Stomach (tissue), 19 donors: ENCODE measurements at regions of chr7 and their contacts with region 1.

Region 1: DNA sequence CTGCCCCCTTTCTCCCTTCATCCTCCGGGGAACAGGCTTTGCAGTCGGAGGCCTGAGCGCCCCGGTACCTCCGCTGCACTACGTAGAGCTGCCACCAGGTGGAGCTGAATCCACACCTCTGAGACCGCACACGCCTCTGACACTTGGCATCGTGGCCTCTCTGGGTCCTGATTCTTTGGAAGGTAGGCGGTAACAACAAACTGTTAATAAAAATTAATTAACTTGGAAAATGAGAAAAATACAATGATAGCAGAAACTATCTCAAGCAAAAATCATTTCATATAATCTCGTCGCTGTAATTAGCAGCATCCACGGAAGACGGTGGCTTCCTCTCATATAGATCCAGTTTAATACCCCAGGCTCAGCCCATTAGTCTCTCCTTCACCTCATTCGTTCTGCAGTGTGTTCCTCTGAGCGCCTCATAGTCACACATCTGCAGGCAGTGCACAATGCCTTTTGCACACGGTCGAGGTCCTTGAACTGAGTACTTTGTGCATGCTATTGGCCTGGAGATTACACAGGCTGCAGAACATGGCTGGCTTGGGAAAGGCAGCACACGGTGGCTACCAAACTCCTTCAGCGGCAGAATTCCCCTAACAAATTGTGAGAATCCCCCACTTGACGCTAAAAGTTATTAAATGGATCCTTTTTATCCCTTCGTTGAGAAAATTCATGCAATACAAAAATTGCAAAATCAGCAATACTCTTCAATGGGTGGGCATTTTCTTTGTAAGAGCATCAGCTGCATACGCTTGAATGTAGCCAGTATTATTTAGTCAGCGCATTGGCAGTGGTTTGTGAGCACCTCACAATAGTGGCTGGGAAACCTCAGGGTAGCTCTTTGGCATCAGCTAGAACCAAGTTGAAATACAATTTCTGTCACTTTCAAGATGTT is 18.7 kb downstream of the OR9A2 start:
- DNase-seq: peak; percentile 84 to 92
- H3K4me3 ChIP-seq: no peak overlapping the region
- H3K27ac ChIP-seq: no peak overlapping the region
- H3K4me1 ChIP-seq: peaks cover 0 to 6% (median 3%) of the 10 kb centered on the region in 4 donors
- H3K27me3 ChIP-seq: peaks cover 0 to 12% (median 0%) of the 10 kb centered on the region in 3 donors
- CTCF ChIP-seq: peak in 6 of 7 experiments; percentile 38 to 97 (median 94)
- EP300 ChIP-seq: no peak
- POLR2A ChIP-seq: no peak

Region 2: DNA sequence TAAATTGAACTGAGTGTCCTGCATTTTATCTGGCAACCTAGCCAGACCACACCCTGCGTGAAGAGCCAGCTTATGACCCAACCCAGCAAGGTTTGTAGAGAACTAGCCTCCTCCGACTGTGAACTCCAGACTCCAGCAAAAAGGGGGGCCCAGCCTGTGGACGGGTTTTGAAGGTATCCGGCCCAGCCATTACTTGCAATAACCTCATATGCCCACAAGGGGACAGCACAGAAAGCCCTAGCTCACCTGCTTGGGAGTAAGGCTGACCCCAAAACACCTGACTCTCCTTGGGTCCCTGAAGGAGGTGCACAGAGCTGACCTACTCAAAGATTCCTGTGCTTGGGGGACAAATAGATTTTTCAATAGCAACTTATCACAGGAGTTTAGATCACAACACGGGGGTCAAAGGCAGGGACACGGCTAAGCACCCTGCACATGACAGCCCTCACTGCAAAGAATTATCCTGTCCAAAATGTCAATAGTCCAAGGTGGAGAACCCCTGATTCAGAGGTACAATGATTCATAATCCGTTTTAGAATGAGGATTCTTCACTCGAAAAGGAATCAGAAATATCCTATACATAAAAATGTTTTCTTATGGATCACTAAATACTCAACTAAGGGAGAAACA is 127.3 kb before region 1 on chr7:
- intact Hi-C with region 1: loop called (anchors 5 kb)
- DNase-seq: peak; percentile 58 to 70
- H3K4me3 ChIP-seq: no peak overlapping the region
- H3K27ac ChIP-seq: no peak overlapping the region
- H3K4me1 ChIP-seq: peaks cover 0 to 18% (median 8%) of the 10 kb centered on the region in 4 donors
- H3K27me3 ChIP-seq: peaks cover 0 to 26% (median 0%) of the 10 kb centered on the region in 3 donors
- CTCF ChIP-seq: peak in 5 of 7 experiments; percentile 55 to 85 (median 85)
- EP300 ChIP-seq: no peak
- POLR2A ChIP-seq: no peak

Region 3: GRCh38 chr7:142894112-142894984 is 113.9 kb before region 1 on chr7:
- intact Hi-C with region 1: no loop called
- DNase-seq: no peak
- H3K4me3 ChIP-seq: no peak overlapping the region
- H3K27ac ChIP-seq: no peak overlapping the region
- H3K4me1 ChIP-seq: no peaks in the 10 kb centered on the region
- H3K27me3 ChIP-seq: peaks cover 0 to 26% (median 0%) of the 10 kb centered on the region in 3 donors
- CTCF ChIP-seq: no peak
- EP300 ChIP-seq: no peak
- POLR2A ChIP-seq: no peak

Region 4: DNA sequence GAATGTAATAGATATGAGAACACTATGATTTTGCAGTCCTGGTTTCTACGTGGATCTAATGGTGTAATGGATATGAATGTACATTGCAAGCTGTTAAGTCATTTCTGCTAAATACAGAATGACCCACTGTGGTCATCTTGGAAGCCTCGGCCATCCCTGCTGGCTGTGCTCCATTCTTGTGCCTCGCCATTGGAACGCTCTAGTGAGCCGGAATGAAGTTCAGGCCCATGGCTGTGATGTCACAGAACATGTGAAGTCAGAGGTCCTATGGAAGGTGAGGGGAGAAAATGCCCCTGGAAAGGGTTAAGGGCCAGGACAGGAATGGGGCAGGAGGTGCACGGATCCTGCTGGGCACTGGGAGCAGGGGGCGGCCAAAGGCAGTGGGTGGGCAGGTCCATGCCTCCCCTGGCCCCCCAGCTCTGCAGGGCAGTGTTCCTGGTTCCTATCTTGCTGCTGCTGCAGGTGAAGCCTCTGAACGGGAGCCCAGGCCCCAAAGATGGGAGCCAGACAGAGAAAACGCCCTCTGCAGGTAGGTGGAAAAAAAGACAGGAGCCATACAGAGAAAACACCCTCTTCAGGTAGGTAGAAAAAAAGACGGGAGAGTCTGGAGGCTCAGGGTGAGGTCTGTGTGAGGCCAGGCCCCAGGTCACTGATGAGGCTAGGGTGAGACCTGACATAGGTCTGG is 68.9 kb before region 1 on chr7 and contains the start of gene LLCFC1:
- intact Hi-C with region 1: no loop called
- DNase-seq: peak; percentile 32 to 50
- H3K4me3 ChIP-seq: no peak within 1 kb of the TSS
- H3K27ac ChIP-seq: no peak within 1 kb of the TSS
- H3K4me1 ChIP-seq: no peaks in the 10 kb centered on the region
- H3K27me3 ChIP-seq: no peaks in the 10 kb centered on the region
- CTCF ChIP-seq: peak in 4 of 7 experiments; percentile 25 to 39 (median 32)
- EP300 ChIP-seq: no peak
- POLR2A ChIP-seq: no peak
- total RNA-seq, gene LLCFC1: not detected

Region 5: DNA sequence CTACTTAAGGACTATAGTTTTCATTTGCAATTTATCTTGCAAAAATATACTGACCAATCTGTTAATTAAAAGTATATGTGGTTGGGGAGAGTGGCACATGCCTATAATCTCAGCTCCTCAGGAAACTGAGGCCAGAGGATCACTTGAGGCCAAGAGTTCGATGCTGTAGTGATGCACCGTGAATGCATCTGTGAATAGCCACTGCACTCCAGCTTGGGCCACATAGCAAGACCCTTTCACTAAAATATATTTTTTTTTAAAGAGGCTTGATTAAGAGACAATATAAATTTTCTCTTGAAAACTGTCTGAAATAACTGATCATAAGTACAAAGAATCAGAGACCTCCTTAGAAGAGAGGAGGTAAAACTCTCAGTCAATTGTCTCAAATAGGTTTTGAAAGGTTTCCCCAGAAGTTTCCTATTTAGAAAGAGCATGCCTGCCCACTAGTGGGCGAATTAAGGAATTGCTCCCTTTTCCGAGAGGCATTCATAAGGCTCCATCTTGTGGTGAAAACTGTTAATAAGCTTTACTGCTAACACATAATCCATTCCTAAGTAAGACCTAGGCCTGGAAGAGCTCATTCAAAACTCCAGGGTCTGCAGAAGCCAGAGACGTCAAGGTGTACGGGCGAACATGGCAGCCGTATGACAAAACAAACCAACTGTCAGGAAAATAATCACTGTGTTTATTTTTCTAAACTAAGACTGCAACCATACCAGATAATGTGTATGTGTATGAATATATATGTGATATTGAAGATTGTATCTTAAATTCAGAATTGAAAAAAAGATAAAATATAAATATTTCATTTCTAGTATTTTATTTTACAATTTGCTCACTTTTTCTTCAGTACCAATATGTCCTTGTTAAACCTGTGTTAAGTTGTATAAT is 206.8 kb after region 1 on chr7:
- intact Hi-C with region 1: loop called (anchors 5 kb)
- DNase-seq: peak; percentile 62 to 91
- H3K4me3 ChIP-seq: no peak overlapping the region
- H3K27ac ChIP-seq: no peak overlapping the region
- H3K4me1 ChIP-seq: no peaks in the 10 kb centered on the region
- H3K27me3 ChIP-seq: peaks cover 0 to 3% (median 0%) of the 10 kb centered on the region in 3 donors
- CTCF ChIP-seq: peak in 5 of 7 experiments; percentile 92 to 99 (median 97)
- EP300 ChIP-seq: no peak
- POLR2A ChIP-seq: no peak